ENCODE measurements at regions of chr9 and their contacts with region 1.

Region 1: DNA sequence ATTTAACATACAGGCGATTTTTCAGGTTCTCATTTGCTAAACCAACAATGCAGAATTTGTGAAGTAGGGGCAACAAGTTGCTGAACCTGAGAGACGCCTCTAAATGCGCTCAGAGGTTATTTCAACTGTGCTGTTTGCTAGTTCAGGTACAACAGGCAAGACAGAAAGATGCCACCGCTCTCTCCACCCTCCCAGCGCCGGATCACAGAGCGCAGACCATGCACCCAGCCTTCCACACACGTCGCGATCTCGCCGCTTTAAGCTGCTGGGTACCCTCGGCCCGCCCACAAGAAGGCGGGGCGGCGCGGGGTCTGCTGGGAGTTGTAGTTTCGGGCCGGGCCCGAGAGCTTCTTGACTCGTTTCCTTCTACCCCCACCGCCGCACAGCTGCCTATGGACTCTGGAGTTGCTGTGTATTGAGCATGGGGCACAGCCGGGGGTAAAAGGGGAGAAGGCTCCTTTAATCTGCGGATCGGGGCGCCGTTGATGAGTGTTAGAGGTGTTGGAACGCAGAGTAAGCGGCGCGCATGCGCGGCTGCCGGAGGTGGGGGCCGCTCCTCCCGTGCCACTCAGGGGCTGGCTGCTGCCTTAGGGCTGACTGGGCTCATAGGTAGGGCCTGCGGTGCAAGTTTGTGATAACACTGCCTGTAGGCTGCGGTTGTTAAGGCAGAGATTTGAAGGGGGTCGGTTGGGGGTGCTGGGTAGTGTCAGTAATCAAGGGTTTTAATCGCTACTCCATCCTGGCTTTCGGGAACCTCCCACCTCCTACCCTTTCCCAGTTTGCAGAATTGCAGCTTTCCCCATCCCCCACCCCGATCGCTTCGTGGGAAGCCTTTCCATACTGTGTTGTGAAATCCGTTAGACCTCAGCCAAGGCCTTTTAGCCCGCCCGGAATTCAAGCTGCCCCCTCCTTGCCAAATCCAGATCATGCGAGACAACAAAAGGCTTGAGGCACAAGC is 40.3 kb upstream of the ABCA1 start:
- DNase-seq: peak; percentile 85
- H3K4me3 ChIP-seq: peak overlapping the region; percentile 90
- H3K27ac ChIP-seq: peak overlapping the region; percentile 91
- H3K27me3 ChIP-seq: no peaks in the 10 kb centered on the region
- CTCF ChIP-seq: no peak

Region 2: GRCh38 chr9:104991144-104991953 is 23.0 kb after region 1 on chr9:
- CTCF ChIA-PET with region 1: no interaction called
- POLR2A ChIA-PET with region 1: interaction called, 13 read pairs
- DNase-seq: peak; percentile 51
- H3K4me3 ChIP-seq: peak overlapping the region; percentile 81
- H3K27ac ChIP-seq: peak overlapping the region; percentile 96
- H3K27me3 ChIP-seq: no peaks in the 10 kb centered on the region
- CTCF ChIP-seq: no peak

Region 3: GRCh38 chr9:105103782-105104181 is 135.5 kb after region 1 on chr9:
- CTCF ChIA-PET with region 1: no interaction called
- POLR2A ChIA-PET with region 1: no interaction called
- DNase-seq: no peak
- H3K4me3 ChIP-seq: no peak overlapping the region
- H3K27ac ChIP-seq: no peak overlapping the region
- H3K27me3 ChIP-seq: no peaks in the 10 kb centered on the region
- CTCF ChIP-seq: no peak

Region 4: GRCh38 chr9:105176194-105176593 is 207.9 kb after region 1 on chr9:
- CTCF ChIA-PET with region 1: no interaction called
- POLR2A ChIA-PET with region 1: interaction called, 10 read pairs
- DNase-seq: no peak
- H3K4me3 ChIP-seq: no peak overlapping the region
- H3K27ac ChIP-seq: no peak overlapping the region
- H3K27me3 ChIP-seq: peaks cover 3% of the 10 kb centered on the region
- CTCF ChIP-seq: no peak